HEK293 (cell line): ENCODE measurements at regions of chr18 and their contacts with region 1.

Region 1: DNA sequence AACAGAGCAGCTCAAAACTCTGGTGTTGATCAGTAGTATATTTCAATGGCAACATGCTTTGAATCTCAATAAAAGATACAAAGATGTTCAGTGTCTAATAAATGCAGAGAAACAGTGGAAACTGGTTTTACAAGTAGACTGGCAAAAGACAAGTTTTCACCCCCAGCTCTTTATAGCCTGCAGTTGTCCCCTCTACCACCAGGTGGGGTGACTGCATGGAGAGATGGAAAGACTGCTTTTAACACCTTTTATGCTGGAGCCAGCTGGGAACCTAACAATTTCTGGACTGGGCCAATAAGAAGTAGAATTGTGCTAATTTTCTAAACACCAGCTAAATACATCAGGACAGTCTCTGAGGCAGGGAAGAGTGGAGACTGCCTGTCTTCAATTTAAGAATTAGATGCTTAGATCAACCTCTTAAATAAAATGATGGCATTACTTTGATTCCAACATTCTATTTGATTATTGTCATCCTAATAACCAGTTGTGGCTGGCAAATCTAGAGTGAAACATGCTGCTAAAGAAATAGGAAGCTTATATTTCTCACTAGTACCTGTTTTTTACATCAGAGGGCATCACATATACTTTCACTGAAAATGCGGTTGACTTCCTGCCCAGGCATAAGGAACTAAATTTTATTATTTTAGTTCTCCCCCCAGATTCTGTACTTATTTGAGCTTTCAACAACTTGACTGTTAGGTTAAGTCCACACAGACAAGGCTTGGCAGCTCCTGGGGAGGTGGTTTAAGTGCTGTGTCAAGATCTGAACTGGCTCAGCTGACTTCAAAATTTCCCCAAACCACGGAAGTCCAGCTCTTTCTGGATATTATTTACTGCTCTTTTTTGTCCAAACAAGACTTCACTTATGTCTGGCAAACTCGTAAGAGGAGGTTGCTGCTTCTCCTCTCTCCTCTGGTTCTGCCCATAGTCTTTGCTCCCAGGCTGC is 140.5 kb downstream of the TPGS2 start:
- H3K4me3 ChIP-seq: no peak overlapping the region
- H3K27ac ChIP-seq: no peak overlapping the region
- H3K4me1 ChIP-seq: no peaks in the 10 kb centered on the region
- CTCF ChIP-seq: 0 out of 2 replicates have a peak, but pooled peaks have one; percentile 35

Region 2: DNA sequence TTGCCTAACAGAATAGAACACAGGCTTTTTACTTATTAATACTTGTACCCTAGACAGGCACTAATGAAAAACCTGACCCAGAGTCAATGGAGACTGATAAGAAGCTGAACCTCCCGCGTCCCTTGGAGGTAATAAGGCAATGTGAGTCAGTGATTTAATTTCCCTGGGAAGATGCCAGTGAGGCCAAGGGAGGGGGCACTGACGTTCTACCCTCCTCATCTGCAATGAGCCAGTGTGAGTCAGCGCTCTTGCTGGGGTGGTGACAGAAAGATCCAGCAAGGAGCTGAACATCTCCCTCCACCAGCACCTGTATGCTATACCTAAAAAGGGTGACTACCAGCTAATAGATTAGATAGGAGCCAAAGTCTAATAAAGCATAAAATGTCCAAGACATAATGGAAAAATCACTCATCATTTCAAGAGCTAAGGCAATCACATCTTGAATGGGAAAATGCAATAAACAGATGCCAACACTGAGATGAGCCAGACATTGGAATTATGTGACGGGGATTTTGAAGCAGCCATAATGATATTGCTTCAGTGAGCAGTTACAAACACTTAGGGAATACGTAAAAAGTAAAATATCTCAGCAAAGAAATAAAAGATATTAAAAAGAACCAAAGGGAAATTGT is 23.6 kb after region 1 on chr18:
- CTCF ChIA-PET with region 1: interaction called, 24 read pairs
- POLR2A ChIA-PET with region 1: no interaction called
- H3K4me3 ChIP-seq: no peak overlapping the region
- H3K27ac ChIP-seq: no peak overlapping the region
- H3K4me1 ChIP-seq: no peaks in the 10 kb centered on the region
- CTCF ChIP-seq: no peak

Region 3: GRCh38 chr18:36718705-36719328 is 30.5 kb after region 1 on chr18:
- CTCF ChIA-PET with region 1: interaction called, 10 read pairs
- POLR2A ChIA-PET with region 1: no interaction called
- H3K4me3 ChIP-seq: no peak overlapping the region
- H3K27ac ChIP-seq: no peak overlapping the region
- H3K4me1 ChIP-seq: no peaks in the 10 kb centered on the region
- CTCF ChIP-seq: no peak

Region 4: GRCh38 chr18:36757081-36757480 is 68.8 kb after region 1 on chr18:
- CTCF ChIA-PET with region 1: interaction called, 35 read pairs
- POLR2A ChIA-PET with region 1: no interaction called
- H3K4me3 ChIP-seq: no peak overlapping the region
- H3K27ac ChIP-seq: no peak overlapping the region
- H3K4me1 ChIP-seq: no peaks in the 10 kb centered on the region
- CTCF ChIP-seq: no peak

Region 5: DNA sequence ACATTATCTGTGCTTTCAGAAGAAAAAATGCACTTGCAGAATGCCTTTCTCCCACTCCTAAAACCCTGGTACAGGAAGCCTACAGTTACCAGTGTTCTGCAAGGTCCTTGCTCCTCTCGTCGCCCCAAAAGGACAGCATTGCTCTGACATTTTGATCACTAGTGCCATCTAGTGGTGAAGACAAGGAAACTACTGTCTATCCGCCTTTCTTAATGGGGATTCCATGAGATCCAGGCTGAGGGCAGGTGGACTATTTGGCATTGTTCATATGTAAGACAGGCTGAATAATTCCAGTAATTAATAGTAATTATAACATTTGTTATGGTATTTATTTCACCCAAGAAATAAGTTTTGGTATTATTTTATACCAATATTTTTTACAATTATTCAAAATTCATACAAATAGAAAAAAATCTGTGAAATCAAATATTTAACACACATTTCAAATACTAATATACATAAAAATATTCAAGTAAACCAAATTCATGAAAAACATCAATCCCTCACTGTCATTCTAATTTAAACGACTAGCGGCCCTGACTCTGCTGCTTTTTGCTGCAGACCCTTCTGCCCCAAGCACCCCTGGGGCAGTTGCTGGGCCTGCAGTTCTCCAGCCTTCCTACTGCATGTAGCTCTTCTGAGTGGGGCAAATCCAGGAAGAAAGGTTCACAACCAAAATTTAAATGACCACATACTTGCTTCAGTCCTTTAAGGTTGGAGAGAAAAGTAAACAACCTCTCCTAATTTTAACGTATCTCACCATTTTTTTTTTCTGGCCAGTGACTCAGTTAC is 121.5 kb after region 1 on chr18:
- CTCF ChIA-PET with region 1: interaction called, 11 read pairs
- POLR2A ChIA-PET with region 1: no interaction called
- H3K4me3 ChIP-seq: no peak overlapping the region
- H3K27ac ChIP-seq: no peak overlapping the region
- H3K4me1 ChIP-seq: 0 out of 2 replicates have a peak, but pooled peaks cover under 1% of the 10 kb centered on the region
- CTCF ChIP-seq: peak; percentile 55; the same call in 1 of the 2 replicates

Region 6: GRCh38 chr18:36993068-36993467 is 304.8 kb after region 1 on chr18:
- CTCF ChIA-PET with region 1: no interaction called
- POLR2A ChIA-PET with region 1: no interaction called
- H3K4me3 ChIP-seq: no peak overlapping the region
- H3K27ac ChIP-seq: no peak overlapping the region
- H3K4me1 ChIP-seq: no peaks in the 10 kb centered on the region
- CTCF ChIP-seq: no peak